GM12878 (cell line): ENCODE measurements at regions of chr17 and their contacts with region 1.

Region 1: GRCh38 chr17:57468932-57469775 is 212.8 kb downstream of the MSI2 start:
- DNase-seq: peak; percentile 68
- ATAC-seq: peak; percentile 74
- H3K4me3 ChIP-seq: no peak overlapping the region
- H3K27ac ChIP-seq: peak overlapping the region; percentile 93
- H3K4me1 ChIP-seq: peaks cover 56% of the 10 kb centered on the region
- H3K27me3 ChIP-seq: no peaks in the 10 kb centered on the region
- CTCF ChIP-seq: no peak
- EP300 ChIP-seq: peak; percentile 57 to 84; a peak in 3 of 4 replicates
- POLR2A ChIP-seq: no peak
- RAD21 ChIP-seq: no peak

Region 2: GRCh38 chr17:57271821-57272220 is 197.3 kb before region 1 on chr17:
- CTCF ChIA-PET with region 1: no interaction called
- POLR2A ChIA-PET with region 1: no interaction called
- RAD21 ChIA-PET with region 1: no interaction called
- SMC1A ChIA-PET with region 1: no interaction called
- in situ Hi-C with region 1: no loop called
- intact Hi-C with region 1: no loop called
- DNase-seq: no peak
- ATAC-seq: no peak
- H3K4me3 ChIP-seq: no peak overlapping the region
- H3K27ac ChIP-seq: no peak overlapping the region
- H3K4me1 ChIP-seq: no peaks in the 10 kb centered on the region; the same call in 1 of the 2 replicates
- H3K27me3 ChIP-seq: no peaks in the 10 kb centered on the region
- CTCF ChIP-seq: no peak
- EP300 ChIP-seq: no peak
- POLR2A ChIP-seq: no peak
- RAD21 ChIP-seq: no peak

Region 3: GRCh38 chr17:57447990-57448758 is 21.0 kb before region 1 on chr17:
- CTCF ChIA-PET with region 1: interaction called, 16 read pairs
- POLR2A ChIA-PET with region 1: interaction called, 3 read pairs
- RAD21 ChIA-PET with region 1: interaction called, 10 read pairs
- SMC1A ChIA-PET with region 1: interaction called, 14 read pairs
- in situ Hi-C with region 1: no loop called
- intact Hi-C with region 1: no loop called
- DNase-seq: no peak
- ATAC-seq: no peak
- H3K4me3 ChIP-seq: no peak overlapping the region
- H3K27ac ChIP-seq: peak overlapping the region; percentile 7
- H3K4me1 ChIP-seq: peaks cover 62% of the 10 kb centered on the region
- H3K27me3 ChIP-seq: no peaks in the 10 kb centered on the region
- CTCF ChIP-seq: no peak
- EP300 ChIP-seq: no peak
- POLR2A ChIP-seq: no peak
- RAD21 ChIP-seq: no peak

Region 4: GRCh38 chr17:57480438-57481196 is 11.5 kb after region 1 on chr17:
- CTCF ChIA-PET with region 1: interaction called, 17 read pairs
- POLR2A ChIA-PET with region 1: interaction called, 12 read pairs
- RAD21 ChIA-PET with region 1: interaction called, 28 read pairs
- SMC1A ChIA-PET with region 1: interaction called, 102 read pairs
- in situ Hi-C with region 1: no loop called
- intact Hi-C with region 1: no loop called
- DNase-seq: no peak
- ATAC-seq: peak; percentile 63
- H3K4me3 ChIP-seq: no peak overlapping the region
- H3K27ac ChIP-seq: peak overlapping the region; percentile 67
- H3K4me1 ChIP-seq: peaks cover 20% of the 10 kb centered on the region
- H3K27me3 ChIP-seq: no peaks in the 10 kb centered on the region
- CTCF ChIP-seq: no peak
- EP300 ChIP-seq: no peak
- POLR2A ChIP-seq: no peak
- RAD21 ChIP-seq: no peak

Region 5: DNA sequence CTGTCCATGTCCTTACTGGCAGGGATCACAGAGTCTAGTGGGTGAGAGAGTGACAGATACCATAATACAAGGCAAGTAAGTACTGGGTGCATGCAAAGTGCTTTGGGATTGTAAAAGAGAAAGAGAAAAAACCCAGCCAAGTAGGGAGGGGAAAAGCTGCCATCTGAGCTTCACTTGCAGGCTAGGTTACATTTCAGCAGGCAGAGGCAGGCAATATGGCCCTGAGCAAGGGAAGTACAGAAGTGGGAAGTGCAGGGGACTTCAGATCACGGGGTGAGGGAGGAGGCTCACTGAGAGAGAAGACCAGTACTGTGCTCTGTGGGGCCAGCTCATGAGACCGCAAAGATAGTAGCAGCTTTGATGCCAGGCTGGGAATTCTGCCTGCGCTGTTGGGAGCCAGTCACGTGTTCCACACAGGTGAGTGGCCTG is 17.7 kb after region 1 on chr17:
- CTCF ChIA-PET with region 1: interaction called, 17 read pairs
- POLR2A ChIA-PET with region 1: interaction called, 12 read pairs
- RAD21 ChIA-PET with region 1: interaction called, 28 read pairs
- SMC1A ChIA-PET with region 1: interaction called, 102 read pairs
- in situ Hi-C with region 1: no loop called
- intact Hi-C with region 1: no loop called
- DNase-seq: no peak
- ATAC-seq: peak; percentile 53
- H3K4me3 ChIP-seq: no peak overlapping the region
- H3K27ac ChIP-seq: peak overlapping the region; percentile 72
- H3K4me1 ChIP-seq: peaks cover 35% of the 10 kb centered on the region
- H3K27me3 ChIP-seq: no peaks in the 10 kb centered on the region
- CTCF ChIP-seq: no peak
- EP300 ChIP-seq: no peak
- POLR2A ChIP-seq: no peak
- RAD21 ChIP-seq: no peak